ENCODE measurements at regions of chr9 and their contacts with region 1.

Region 1: GRCh38 chr9:68584189-68585033 is 43.7 kb upstream of the TMEM252 start:
- DNase-seq: peak; percentile 87
- ATAC-seq: peak; percentile 98

Region 2: GRCh38 chr9:68704814-68705530 is 120.6 kb after region 1 on chr9 and contains the start of gene PIP5K1B:
- intact Hi-C with region 1: loop called (anchors 5 kb)
- DNase-seq: peak; percentile 85
- ATAC-seq: peak; percentile 90
- total RNA-seq, gene PIP5K1B: 62.8 TPM

Region 3: DNA sequence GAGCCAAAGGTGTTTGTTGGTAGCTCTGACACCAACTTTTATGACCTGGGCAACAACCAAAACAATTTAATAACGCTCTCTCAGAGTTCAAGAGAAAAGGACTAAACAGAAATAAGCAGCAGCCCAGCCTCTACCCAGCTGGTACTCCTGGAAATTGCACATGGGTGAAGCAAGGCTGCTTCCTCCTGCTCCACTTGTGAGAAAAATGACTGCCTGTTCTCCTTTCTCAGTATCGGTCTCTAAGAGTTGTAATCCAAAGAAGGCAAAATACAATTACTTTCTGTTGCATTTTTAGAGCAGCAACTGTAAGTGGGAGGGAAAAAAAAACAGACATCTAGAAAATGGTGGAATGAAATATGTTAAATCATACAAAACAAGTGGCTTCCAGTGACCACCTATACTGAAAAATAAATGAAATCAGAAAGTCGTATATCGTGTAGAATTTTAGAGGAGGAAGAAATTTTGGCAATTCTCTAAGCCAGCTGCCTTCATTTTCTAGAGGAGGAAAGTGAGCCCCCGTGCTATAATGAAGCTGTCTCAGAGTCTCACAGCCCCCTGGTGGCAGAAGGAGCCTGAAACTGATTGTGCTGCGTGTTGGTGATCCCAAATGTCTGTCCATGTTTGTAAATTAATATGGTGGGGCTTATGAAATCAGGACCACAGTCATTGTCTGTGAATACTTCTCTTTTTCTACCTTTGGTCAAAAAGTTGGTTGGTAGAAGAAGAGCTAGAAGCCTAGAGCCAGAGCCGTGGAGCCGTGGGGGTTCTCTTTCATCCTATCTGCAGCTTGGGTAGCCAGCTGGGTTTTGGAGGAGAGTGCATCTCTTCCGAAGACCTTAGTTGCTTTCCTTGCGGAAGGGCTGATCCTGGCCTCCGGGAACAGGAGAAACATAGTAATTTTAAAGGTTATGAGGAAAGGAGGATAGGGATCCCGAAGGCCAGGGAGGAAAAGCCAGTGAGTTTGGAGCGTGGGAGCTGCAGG is 260.5 kb after region 1 on chr9:
- intact Hi-C with region 1: loop called (anchors 10 kb)
- DNase-seq: peak; percentile 59
- ATAC-seq: peak; percentile 60

Region 4: GRCh38 chr9:68999393-69000105 is 415.1 kb after region 1 on chr9:
- intact Hi-C with region 1: loop called (anchors 5 kb)
- DNase-seq: peak; percentile 50
- ATAC-seq: peak; percentile 90

Region 5: DNA sequence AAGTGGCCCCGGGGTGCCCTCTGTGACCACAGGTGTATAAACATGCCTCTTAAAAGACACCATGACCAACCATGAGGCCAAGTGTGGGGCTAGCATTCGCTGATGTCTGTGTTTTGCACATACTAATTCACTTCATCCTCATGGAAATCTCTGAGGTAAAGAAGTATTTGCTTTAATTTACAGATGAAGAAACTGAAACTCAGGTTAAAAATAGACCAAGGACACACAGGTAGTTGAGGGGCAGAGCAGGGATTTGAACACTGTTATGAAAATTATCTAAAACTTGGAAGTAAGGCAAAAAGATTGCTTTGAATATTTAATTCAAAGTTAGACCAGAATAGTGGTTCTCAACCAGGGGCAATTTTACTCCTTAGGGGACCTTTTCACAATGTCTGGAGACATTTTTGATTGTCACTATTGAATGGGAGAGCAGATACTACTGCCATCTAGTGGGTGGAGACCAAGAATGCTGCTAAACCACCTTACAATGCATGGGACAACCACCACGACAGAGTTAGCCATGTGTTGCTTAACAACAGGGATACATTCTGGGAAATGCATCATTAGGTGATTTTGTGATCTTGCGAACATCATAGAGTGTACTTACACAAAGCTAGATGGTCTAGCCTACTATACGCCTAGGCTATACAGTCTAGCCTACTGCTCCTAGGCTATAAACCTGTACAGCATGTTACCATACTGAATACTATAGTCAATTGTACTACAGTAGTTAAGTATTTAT is 443.1 kb after region 1 on chr9:
- intact Hi-C with region 1: loop called (anchors 5 kb)
- DNase-seq: no peak
- ATAC-seq: peak; percentile 83

Measured in Right ventricle myocardium superior (tissue), 1 donor.